T-cell (primary cell): ENCODE measurements at regions of chr4 and their contacts with region 1.

Region 1: GRCh38 chr4:52983563-52984303 is 121.6 kb downstream of the RASL11B start:
- DNase-seq: peak in 5 of 35 experiments; percentile 1 to 62 (median 8)
- ATAC-seq: peak in 1 of 4 experiments; percentile 51
- H3K4me3 ChIP-seq: no peak overlapping the region
- H3K4me3 Mint-ChIP-seq: no peak overlapping the region
- H3K27ac ChIP-seq: no peak overlapping the region
- H3K27ac Mint-ChIP-seq: no peak overlapping the region
- H3K4me1 ChIP-seq: peaks cover 0 to 3% of the 10 kb centered on the region in 2 experiments
- H3K4me1 Mint-ChIP-seq: peaks cover 0 to 4% (median 3%) of the 10 kb centered on the region in 3 donors
- H3K27me3 ChIP-seq: no peaks in the 10 kb centered on the region
- H3K27me3 Mint-ChIP-seq: no peaks in the 10 kb centered on the region

Region 2: DNA sequence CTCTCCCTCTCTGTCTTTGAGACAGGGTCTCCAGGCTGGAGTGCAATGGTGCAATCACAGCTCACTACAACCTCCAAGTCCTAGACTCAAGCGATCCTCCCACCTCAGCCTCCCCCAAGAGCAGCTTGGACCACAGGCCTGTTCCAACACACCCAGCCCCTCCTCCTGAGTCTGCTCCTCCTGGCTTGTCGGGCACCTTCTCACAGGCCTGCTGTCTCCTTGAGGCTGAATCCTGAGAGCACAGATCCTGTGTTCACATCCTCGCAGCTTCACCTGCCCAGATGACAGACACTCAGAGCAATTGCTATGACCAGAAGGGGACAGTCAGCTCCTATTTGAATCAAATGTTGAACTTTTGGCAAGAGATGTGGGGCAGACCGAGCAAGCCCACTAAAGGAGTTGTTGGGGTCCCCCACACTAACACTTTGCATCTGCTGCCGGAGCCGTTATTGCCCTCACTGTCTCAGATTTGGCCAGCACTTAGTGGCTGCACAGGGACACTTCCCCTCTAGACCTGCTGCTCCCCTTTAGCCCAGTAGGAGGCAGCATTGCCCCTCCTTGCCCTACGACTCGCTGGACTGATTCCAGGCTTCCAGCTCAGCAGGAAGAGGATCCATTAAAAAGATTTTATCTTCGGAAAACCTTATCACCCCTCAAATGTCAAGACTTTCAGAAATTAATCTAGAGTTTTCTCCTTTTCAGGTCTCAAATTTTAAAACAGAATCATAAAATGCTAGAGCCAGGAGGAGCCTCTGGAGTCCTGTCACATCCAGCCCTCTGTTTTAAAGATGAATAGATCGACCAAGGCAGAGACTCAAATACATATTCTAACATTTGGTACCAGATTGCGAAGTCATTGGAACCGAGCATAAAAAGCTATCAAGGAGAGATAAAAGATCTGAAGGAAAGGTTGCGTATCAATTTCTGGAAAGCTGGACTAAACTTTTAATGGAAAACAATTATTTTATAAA is 438.3 kb before region 1 on chr4:
- CTCF ChIA-PET with region 1: interaction called, 13 to 22 read pairs
- POLR2A ChIA-PET with region 1: no interaction called
- DNase-seq: peak in 31 of 35 experiments; percentile 2 to 69 (median 33)
- ATAC-seq: peak in 2 of 4 experiments; percentile 50 to 62
- H3K4me3 ChIP-seq: no peak overlapping the region
- H3K4me3 Mint-ChIP-seq: no peak overlapping the region
- H3K27ac ChIP-seq: no peak overlapping the region
- H3K27ac Mint-ChIP-seq: no peak overlapping the region
- H3K4me1 ChIP-seq: no peaks in the 10 kb centered on the region
- H3K4me1 Mint-ChIP-seq: no peaks in the 10 kb centered on the region
- H3K27me3 ChIP-seq: peaks cover 0 to 7% of the 10 kb centered on the region in 2 experiments
- H3K27me3 Mint-ChIP-seq: peaks cover 3 to 5% of the 10 kb centered on the region in 2 donors